HepG2 (cell line): ENCODE measurements at regions of chr2 and their contacts with region 1.

Region 1: GRCh38 chr2:233443468-233444183 is 89.3 kb downstream of the DGKD start:
- DNase-seq: peak; percentile 69
- ATAC-seq: peak; percentile 69
- H3K4me3 ChIP-seq: no peak overlapping the region
- H3K27ac ChIP-seq: no peak overlapping the region
- H3K4me1 ChIP-seq: peaks cover 8% of the 10 kb centered on the region
- H3K27me3 ChIP-seq: no peaks in the 10 kb centered on the region
- CTCF ChIP-seq: peak; percentile 81
- EP300 ChIP-seq: no peak
- POLR2A ChIP-seq: no peak
- RAD21 ChIP-seq: peak; percentile 83

Region 2: DNA sequence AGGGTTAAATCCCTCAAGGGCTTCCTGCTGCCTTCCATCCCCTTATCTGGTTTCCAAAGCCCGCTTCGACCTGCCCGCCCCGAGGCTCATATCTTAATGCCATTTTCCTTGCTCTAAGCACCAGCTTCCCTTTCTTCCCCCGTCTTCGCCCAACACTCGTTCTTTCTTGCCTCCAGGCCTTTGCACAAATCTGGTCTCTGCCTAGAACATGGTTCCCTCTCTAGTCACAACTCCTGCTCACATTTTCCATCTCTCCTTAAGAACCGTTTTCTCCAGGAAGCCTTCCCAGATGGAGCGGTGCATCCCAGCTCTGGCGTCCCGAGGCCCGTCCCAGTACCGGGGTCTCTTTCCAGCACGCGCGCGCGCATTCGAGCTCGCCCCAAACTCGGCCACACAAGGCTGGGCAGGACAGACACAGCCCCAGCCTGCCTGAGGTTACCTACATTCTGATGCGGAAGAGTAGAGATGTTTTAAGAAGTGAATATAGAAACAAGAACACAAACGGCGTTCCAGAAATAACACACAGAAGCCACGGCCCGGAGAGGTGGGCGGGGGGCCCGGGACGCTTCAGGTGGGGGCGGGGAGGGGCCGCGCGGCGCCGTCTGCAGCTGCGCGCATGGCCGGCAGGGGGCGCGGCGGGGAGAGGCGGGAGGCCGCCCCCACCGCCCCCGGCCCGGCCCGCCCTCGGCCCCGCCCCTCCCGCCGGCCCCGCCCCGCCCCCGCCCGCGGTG is 89.7 kb before region 1 on chr2 and contains the start of gene DGKD:
- CTCF ChIA-PET with region 1: interaction called, 7 read pairs
- POLR2A ChIA-PET with region 1: no interaction called
- in situ Hi-C with region 1: no loop called
- intact Hi-C with region 1: loop called (anchors 10 kb)
- DNase-seq: peak; percentile 79
- ATAC-seq: peak; percentile 69
- H3K4me3 ChIP-seq: peak within 1 kb of the TSS; percentile 91 to 94 (median 93)
- H3K27ac ChIP-seq: peak within 1 kb of the TSS; percentile 68
- H3K4me1 ChIP-seq: peaks cover 76% of the 10 kb centered on the region
- H3K27me3 ChIP-seq: no peaks in the 10 kb centered on the region; a peak in 1 of 5 replicates
- CTCF ChIP-seq: peak; percentile 22
- EP300 ChIP-seq: no peak; a peak in 1 of 4 replicates
- POLR2A ChIP-seq: peak; percentile 27 to 43; a peak in 2 of 4 replicates
- RAD21 ChIP-seq: peak; percentile 39; the same call in 1 of the 2 replicates
- total RNA-seq, gene DGKD: 20.6 and 24.5 TPM in 2 replicates

Region 3: DNA sequence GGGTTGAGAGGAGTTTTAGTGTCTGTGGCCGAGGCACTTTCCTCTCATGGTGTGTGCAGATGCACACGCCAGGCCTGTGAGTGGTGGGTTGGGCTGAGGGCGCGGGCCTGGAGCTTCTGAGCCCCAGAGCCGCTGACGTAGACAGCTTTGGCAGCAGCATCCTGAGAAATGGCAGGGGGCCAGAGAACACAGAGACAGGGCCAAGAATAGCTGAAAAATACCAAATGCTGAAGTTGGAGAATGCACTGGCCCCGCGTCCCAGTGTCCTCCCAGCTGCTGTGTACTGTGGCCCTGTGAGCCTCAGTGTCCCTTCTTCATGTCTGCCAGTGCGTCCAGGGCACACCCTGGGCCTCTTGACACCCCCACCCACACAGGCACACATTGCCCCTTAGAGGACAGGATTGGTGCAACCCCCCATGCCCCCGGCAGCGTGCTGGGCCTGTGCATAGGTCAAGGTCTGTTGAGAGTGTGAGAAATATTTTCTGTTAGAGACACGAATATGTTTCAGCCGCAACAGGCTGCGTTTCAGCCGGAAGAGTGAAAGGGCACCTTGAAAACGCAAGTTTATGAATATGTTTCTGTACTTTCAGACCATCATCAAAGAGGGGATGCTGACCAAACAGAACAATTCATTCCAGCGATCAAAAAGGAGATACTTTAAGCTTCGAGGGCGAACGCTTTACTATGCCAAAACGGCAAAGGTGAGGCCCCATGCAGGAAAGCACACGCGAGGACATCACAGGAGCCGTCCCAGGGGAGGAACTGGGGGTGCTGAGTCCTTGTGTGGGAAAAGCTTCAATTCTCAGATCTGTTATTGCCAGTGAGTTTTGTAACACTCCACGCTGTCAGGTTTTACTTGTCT is 55.7 kb before region 1 on chr2:
- CTCF ChIA-PET with region 1: no interaction called
- POLR2A ChIA-PET with region 1: no interaction called
- in situ Hi-C with region 1: no loop called
- intact Hi-C with region 1: loop called (anchors 1 kb)
- DNase-seq: peak; percentile 85
- ATAC-seq: peak; percentile 82
- H3K4me3 ChIP-seq: peak overlapping the region; percentile 44 to 65 (median 45)
- H3K27ac ChIP-seq: peak overlapping the region; percentile 80
- H3K4me1 ChIP-seq: peaks cover 65% of the 10 kb centered on the region
- H3K27me3 ChIP-seq: no peaks in the 10 kb centered on the region
- CTCF ChIP-seq: peak; percentile 69
- EP300 ChIP-seq: peak; percentile 22 to 65; a peak in 2 of 4 replicates
- POLR2A ChIP-seq: peak in 1 of 2 experiments; percentile 76; a peak in 2 of 4 replicates
- RAD21 ChIP-seq: peak; percentile 67

Region 4: GRCh38 chr2:233404222-233404621 is 39.4 kb before region 1 on chr2:
- CTCF ChIA-PET with region 1: interaction called, 16 read pairs
- POLR2A ChIA-PET with region 1: no interaction called
- in situ Hi-C with region 1: no loop called
- intact Hi-C with region 1: loop called (anchors 1 kb)
- DNase-seq: peak; percentile 48
- ATAC-seq: peak; percentile 76
- H3K4me3 ChIP-seq: no peak overlapping the region
- H3K27ac ChIP-seq: no peak overlapping the region
- H3K4me1 ChIP-seq: no peaks in the 10 kb centered on the region
- H3K27me3 ChIP-seq: no peaks in the 10 kb centered on the region
- CTCF ChIP-seq: peak; percentile 69
- EP300 ChIP-seq: no peak
- POLR2A ChIP-seq: no peak
- RAD21 ChIP-seq: no peak

Region 5: GRCh38 chr2:233700028-233700635 is 256.5 kb after region 1 on chr2:
- CTCF ChIA-PET with region 1: no interaction called
- POLR2A ChIA-PET with region 1: no interaction called
- in situ Hi-C with region 1: no loop called
- intact Hi-C with region 1: no loop called
- DNase-seq: peak; percentile 56
- ATAC-seq: no peak
- H3K4me3 ChIP-seq: no peak overlapping the region
- H3K27ac ChIP-seq: peak overlapping the region; percentile 12
- H3K4me1 ChIP-seq: peaks cover under 1% of the 10 kb centered on the region; the same call in 1 of the 2 replicates
- H3K27me3 ChIP-seq: no peaks in the 10 kb centered on the region
- CTCF ChIP-seq: no peak
- EP300 ChIP-seq: peak in 1 of 2 experiments; percentile 59; a peak in 1 of 4 replicates
- POLR2A ChIP-seq: no peak
- RAD21 ChIP-seq: no peak

Region 6: DNA sequence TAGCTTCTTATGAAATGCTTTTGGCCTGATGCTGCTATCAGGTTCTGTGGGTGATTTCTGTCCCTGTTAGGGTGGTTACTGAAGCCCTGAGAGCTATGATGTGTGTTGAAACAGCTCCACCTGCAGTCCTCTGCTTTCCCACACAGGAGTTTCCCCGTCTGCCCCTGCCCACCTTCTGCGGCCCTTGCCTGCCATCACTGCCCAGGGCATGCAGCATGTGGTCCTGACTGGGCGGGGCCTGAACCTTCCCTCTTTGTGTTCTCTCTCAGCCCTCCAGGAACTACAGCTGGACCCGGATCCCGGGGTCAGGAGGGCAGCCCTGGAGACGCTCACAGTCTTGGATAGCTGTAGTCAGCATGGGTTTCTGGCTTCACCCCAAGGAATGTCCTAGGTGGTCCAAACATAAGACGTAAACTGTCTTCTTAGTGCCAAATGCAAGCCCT is 389.3 kb after region 1 on chr2:
- CTCF ChIA-PET with region 1: no interaction called
- POLR2A ChIA-PET with region 1: no interaction called
- in situ Hi-C with region 1: no loop called
- intact Hi-C with region 1: loop called (anchors 10 kb)
- DNase-seq: peak; percentile 54
- ATAC-seq: peak; percentile 77
- H3K4me3 ChIP-seq: no peak overlapping the region
- H3K27ac ChIP-seq: no peak overlapping the region
- H3K4me1 ChIP-seq: no peaks in the 10 kb centered on the region
- H3K27me3 ChIP-seq: no peaks in the 10 kb centered on the region
- CTCF ChIP-seq: peak; percentile 82
- EP300 ChIP-seq: no peak
- POLR2A ChIP-seq: no peak
- RAD21 ChIP-seq: peak; percentile 79